Activated B cell treated with CpG ODN at 0.5 μM for 24 hours (primary cell): ENCODE measurements at regions of chr14 and their contacts with region 1.

Region 1: GRCh38 chr14:60248697-60249318 is at the start of gene PPM1A:
- DNase-seq: peak; percentile 89
- ATAC-seq: peak; percentile 68
- H3K4me3 Mint-ChIP-seq: peak within 1 kb of the TSS; percentile 99
- H3K27ac Mint-ChIP-seq: peak within 1 kb of the TSS; percentile 100
- H3K4me1 Mint-ChIP-seq: peaks cover 52% of the 10 kb centered on the region
- H3K27me3 Mint-ChIP-seq: peaks cover 2% of the 10 kb centered on the region
- CTCF ChIP-seq: no peak
- total RNA-seq, gene PPM1A: 40.1 and 47.5 TPM in 2 replicates

Region 2: GRCh38 chr14:59189786-59190771 is 1058.7 kb before region 1 on chr14:
- CTCF ChIA-PET with region 1: no interaction called
- POLR2A ChIA-PET with region 1: interaction called, 5 read pairs
- intact Hi-C with region 1: loop called (anchors 1 kb)
- DNase-seq: peak; percentile 60
- ATAC-seq: peak; percentile 10
- H3K4me3 Mint-ChIP-seq: peak overlapping the region; percentile 93
- H3K27ac Mint-ChIP-seq: peak overlapping the region; percentile 87
- H3K4me1 Mint-ChIP-seq: peaks cover 21% of the 10 kb centered on the region
- H3K27me3 Mint-ChIP-seq: peaks cover 5% of the 10 kb centered on the region
- CTCF ChIP-seq: no peak

Region 3: DNA sequence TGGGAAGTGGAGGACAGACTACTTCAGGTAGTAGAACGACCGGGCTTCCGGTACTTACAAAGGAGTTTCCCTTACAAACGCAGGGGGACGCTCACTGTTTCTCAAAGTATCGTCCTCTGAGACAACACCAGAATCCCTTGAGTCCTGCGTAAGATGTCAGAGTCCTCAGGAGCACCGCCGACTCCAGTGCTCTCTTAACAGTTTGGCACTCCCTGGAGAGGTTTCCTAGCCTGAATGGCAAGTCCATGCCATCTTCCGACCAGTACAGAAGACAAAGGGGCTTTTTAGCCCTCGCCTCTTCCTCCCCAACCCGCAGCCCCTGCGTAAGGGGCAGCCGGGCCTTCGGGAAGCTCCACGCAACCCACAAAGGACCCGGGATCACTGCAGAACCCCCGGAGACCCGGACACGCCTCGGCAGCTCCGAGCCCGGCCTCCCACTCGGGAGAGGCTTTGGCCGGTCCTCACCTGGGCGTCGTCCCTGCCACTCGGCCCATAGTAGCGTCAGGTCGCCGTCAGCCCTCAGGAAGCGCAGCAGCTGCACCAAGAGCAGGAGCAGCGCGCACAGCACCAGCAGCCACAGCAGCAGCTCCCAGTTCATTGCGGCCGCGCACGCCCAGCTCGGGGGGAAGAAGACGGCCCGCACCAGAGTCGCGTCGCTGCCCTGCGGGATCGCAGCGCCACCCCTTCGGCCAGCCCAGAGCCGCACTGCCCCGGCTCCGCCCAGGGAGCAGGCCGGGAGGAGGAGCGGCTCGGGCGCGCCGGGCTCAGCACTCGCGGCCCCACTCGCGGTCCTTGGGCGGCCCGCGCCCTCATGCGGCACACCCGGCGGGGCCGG is 83.9 kb before region 1 on chr14 and contains the start of gene DHRS7:
- CTCF ChIA-PET with region 1: no interaction called
- POLR2A ChIA-PET with region 1: interaction called, 57 read pairs
- intact Hi-C with region 1: loop called (anchors 1 kb)
- DNase-seq: peak; percentile 70
- ATAC-seq: peak; percentile 88
- H3K4me3 Mint-ChIP-seq: peak within 1 kb of the TSS; percentile 99
- H3K27ac Mint-ChIP-seq: peak within 1 kb of the TSS; percentile 99
- H3K4me1 Mint-ChIP-seq: peaks cover 39% of the 10 kb centered on the region
- H3K27me3 Mint-ChIP-seq: no peaks in the 10 kb centered on the region
- CTCF ChIP-seq: no peak
- total RNA-seq, gene DHRS7: 41.5 and 47.1 TPM in 2 replicates

Region 4: DNA sequence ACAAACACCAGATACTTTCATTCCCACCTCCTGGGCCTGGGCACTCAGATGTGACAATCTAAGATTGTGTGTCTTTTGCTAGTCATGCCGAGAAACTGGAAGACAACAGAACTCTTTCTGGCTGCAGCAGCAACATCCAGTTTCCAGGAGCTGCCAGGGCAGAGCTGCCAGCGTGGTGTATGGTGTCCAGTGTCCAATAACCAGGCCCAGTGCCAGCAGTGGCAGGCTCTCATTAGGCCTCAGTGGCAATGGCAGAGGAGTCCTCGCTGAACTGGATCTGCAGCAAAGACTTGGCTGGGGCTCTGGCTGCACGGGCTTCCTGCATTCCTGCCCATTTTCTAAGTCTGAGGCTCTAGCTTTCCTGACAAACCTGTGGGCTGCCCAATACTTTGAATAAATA is 26.0 kb before region 1 on chr14:
- CTCF ChIA-PET with region 1: no interaction called
- POLR2A ChIA-PET with region 1: interaction called, 13 read pairs
- intact Hi-C with region 1: no loop called
- DNase-seq: no peak
- ATAC-seq: no peak
- H3K4me3 Mint-ChIP-seq: no peak overlapping the region
- H3K27ac Mint-ChIP-seq: no peak overlapping the region
- H3K4me1 Mint-ChIP-seq: peaks cover 10% of the 10 kb centered on the region
- H3K27me3 Mint-ChIP-seq: no peaks in the 10 kb centered on the region
- CTCF ChIP-seq: no peak

Region 5: DNA sequence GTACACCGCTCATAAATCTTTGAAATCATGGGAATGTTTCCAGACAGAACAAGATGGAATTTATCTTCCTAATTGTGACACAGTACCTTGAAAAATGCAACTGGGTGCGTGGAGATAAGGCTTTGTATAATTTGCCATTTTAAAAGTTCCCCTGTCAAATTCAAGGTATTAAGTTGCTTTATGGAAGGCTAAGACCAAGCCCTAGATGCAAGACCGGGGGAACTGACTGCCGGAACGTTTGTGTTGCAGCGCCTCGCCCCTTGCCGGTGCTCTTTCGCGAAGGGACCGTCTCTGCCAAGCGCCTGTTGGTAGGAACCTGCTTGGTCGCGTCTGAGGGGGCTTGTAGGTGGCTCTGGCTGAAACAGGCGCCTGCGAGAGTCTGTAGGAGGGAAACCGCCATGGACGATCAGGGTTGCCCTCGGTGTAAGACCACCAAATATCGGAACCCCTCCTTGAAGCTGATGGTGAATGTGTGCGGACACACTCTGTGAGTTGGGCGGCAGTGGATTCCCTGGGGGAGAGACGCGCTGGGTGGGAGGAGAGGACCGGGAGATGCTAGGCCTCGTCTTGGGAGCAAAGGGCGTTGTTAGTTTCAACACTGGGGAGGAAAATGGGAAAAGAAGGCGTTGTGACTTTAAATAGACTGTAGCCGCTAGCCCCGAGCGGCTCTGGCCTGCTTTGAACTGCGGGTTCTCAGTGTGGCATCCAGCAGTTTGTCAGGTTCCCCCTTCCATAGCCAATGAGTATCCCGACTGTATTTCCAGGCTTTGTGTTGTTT is 485.8 kb after region 1 on chr14 and contains the start of gene MNAT1:
- CTCF ChIA-PET with region 1: no interaction called
- POLR2A ChIA-PET with region 1: interaction called, 5 read pairs
- intact Hi-C with region 1: loop called (anchors 1 kb)
- DNase-seq: peak; percentile 74
- ATAC-seq: peak; percentile 98
- H3K4me3 Mint-ChIP-seq: peak within 1 kb of the TSS; percentile 100
- H3K27ac Mint-ChIP-seq: peak within 1 kb of the TSS; percentile 93
- H3K4me1 Mint-ChIP-seq: peaks cover 25% of the 10 kb centered on the region
- H3K27me3 Mint-ChIP-seq: peaks cover 21% of the 10 kb centered on the region
- CTCF ChIP-seq: no peak
- total RNA-seq, gene MNAT1: 33.6 and 37.1 TPM in 2 replicates

Region 6: GRCh38 chr14:61750708-61751474 is 1502.1 kb after region 1 on chr14:
- CTCF ChIA-PET with region 1: no interaction called
- POLR2A ChIA-PET with region 1: no interaction called
- intact Hi-C with region 1: loop called (anchors 1 kb)
- DNase-seq: peak; percentile 81
- ATAC-seq: peak; percentile 95
- H3K4me3 Mint-ChIP-seq: peak overlapping the region; percentile 87
- H3K27ac Mint-ChIP-seq: peak overlapping the region; percentile 90
- H3K4me1 Mint-ChIP-seq: peaks cover 41% of the 10 kb centered on the region
- H3K27me3 Mint-ChIP-seq: no peaks in the 10 kb centered on the region
- CTCF ChIP-seq: no peak